Left ventricle myocardium superior (tissue), 1 donor: ENCODE measurements at regions of chr11 and their contacts with region 1.

Region 1: GRCh38 chr11:97638641-97639224 is 1248.9 kb downstream of the JRKL start:
- DNase-seq: no peak
- ATAC-seq: no peak

Region 2: DNA sequence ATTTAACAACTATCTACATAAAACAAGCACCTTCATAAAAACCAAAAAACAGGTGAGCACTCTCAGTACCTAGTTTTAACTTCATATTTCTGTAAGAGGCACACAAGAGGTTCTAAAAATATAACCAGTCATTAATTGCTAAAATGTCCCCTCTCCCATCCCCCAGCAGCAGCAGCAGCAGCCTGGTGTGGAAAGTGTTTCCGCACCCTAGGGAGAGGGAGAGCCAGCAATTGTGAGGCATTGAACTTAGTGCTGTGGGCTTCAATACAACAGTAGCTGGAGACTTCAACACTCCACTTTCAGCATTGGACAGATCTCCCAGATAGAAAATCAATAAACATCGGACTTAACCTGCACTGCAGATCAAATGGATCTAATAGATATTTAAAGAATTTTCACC is 90.5 kb before region 1 on chr11:
- intact Hi-C with region 1: no loop called
- DNase-seq: no peak
- ATAC-seq: no peak

Region 3: DNA sequence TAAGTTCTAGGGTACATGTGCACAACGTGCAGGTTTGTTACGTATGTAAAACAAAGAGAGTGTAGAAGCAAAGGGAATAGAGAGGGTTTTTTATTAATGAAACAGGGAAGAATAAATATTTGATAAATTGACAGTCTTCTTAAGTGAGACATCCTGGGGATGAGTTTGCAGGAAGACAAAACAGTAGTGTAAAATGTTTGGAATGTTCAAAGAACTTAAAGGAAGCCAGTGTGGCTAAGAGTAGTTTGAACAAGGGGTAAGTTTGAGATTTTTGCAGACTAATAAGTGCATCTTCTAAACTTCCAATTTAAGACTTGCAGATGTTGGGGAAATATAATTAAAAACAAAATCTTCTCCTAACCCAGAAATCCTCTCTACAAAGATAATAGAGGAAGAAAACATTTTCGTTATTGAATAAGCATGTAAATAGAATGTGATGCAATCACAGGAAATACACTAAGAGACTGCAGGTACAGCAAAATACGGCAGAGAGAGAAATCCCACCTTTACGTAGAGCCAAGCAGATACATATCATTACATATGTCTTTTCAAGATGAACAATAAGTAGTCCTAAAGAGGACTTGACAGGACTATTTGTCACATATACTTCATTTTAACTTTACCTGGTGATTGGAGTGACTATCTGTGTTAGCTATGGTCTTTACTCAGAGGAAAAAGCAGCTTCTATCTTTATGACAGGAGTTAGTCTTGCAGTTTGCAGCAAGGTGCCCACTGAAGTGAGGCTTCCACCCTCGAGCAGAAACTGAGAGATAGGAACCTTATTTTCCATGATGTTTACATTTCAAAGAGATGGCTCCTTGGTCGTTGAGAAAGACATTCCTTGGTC is 1784.1 kb after region 1 on chr11:
- intact Hi-C with region 1: loop called (anchors 5 kb)
- DNase-seq: no peak
- ATAC-seq: no peak